CD8-positive, alpha-beta memory T cell (primary cell): ENCODE measurements at regions of chr9 and their contacts with region 1.

Region 1: GRCh38 chr9:35732122-35732799 is at the starts of genes CREB3 and TLN1:
- DNase-seq: peak; percentile 91 to 98 (median 97)
- H3K4me3 ChIP-seq: peak within 1 kb of the TSS; percentile 97
- H3K4me3 Mint-ChIP-seq: peak within 1 kb of the TSS in 4 of 7 donors; percentile 87 to 96 (median 94)
- H3K27ac ChIP-seq: peak within 1 kb of the TSS; percentile 92
- H3K27ac Mint-ChIP-seq: peak within 1 kb of the TSS in 7 of 8 donors; percentile 92 to 98 (median 95)
- H3K4me1 ChIP-seq: peaks cover 63% of the 10 kb centered on the region
- H3K4me1 Mint-ChIP-seq: peaks cover 20 to 27% (median 22%) of the 10 kb centered on the region in 3 donors
- H3K27me3 ChIP-seq: no peaks in the 10 kb centered on the region
- H3K27me3 Mint-ChIP-seq: no peaks in the 10 kb centered on the region
- total RNA-seq, gene CREB3: 38.0 to 38.6 TPM
- total RNA-seq, gene TLN1: 248 to 249 TPM

Region 2: GRCh38 chr9:35603987-35604577 is 128.2 kb before region 1 on chr9:
- CTCF ChIA-PET with region 1: interaction called, 15 read pairs
- POLR2A ChIA-PET with region 1: interaction called, 19 read pairs
- DNase-seq: peak; percentile 99 to 100 (median 99)
- H3K4me3 ChIP-seq: peak overlapping the region; percentile 99
- H3K4me3 Mint-ChIP-seq: peak overlapping the region; percentile 94 to 99 (median 98)
- H3K27ac ChIP-seq: peak overlapping the region; percentile 87
- H3K27ac Mint-ChIP-seq: peak overlapping the region; percentile 96 to 100 (median 98)
- H3K4me1 ChIP-seq: peaks cover 21% of the 10 kb centered on the region
- H3K4me1 Mint-ChIP-seq: peaks cover 33 to 38% (median 34%) of the 10 kb centered on the region in 3 donors
- H3K27me3 ChIP-seq: no peaks in the 10 kb centered on the region
- H3K27me3 Mint-ChIP-seq: peaks cover 0 to 2% of the 10 kb centered on the region in 2 donors

Region 3: DNA sequence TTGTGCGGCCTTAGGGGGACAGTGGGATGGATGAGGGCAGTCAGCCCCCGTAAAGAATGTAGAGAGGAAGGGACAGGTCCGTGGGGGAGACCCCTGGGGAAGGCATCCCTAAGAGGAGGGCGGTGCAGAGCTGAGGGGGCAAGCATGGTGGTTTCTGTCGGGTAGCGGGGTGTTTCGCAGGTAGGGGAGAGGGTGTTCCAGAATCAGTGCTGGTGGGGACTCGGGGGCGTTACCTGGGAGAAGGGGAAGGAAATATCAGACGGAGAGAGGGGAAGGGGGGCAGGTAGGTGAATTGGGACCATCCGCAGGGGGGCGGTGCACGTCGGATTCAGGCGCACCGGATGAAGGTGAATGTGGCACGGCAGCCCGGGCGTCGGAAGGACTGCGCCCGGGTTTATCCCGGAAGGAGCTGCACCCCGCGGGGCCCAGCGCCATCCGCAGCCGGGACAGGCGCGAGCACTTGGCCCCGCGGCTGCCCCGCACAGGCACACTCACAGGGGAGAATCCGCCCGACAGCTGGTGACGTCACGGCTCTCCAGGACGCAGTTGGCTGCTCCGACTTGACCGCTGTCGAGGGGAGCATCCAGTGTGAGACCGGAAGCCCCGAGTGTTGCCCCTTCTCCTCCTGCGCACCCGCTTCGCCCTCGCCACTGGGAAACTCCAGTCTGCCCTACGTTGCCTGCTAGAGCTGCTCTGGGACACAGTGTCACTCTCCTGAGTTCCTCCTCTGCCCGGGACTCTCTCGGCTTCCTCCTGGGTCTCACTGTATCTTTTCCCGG is 115.4 kb before region 1 on chr9:
- CTCF ChIA-PET with region 1: interaction called, 25 read pairs
- POLR2A ChIA-PET with region 1: interaction called, 13 read pairs
- DNase-seq: peak; percentile 63 to 84 (median 71)
- H3K4me3 ChIP-seq: peak overlapping the region; percentile 82
- H3K4me3 Mint-ChIP-seq: peak overlapping the region; percentile 85 to 92 (median 89)
- H3K27ac ChIP-seq: peak overlapping the region; percentile 70
- H3K27ac Mint-ChIP-seq: peak overlapping the region; percentile 89 to 100 (median 98)
- H3K4me1 ChIP-seq: peaks cover 34% of the 10 kb centered on the region
- H3K4me1 Mint-ChIP-seq: peaks cover 42 to 49% (median 46%) of the 10 kb centered on the region in 3 donors
- H3K27me3 ChIP-seq: no peaks in the 10 kb centered on the region
- H3K27me3 Mint-ChIP-seq: peaks cover 0 to 1% of the 10 kb centered on the region in 2 donors

Region 4: GRCh38 chr9:35696525-35697215 is 35.6 kb before region 1 on chr9:
- CTCF ChIA-PET with region 1: interaction called, 87 read pairs
- POLR2A ChIA-PET with region 1: no interaction called
- DNase-seq: peak; percentile 36 to 71 (median 56)
- H3K4me3 ChIP-seq: no peak overlapping the region
- H3K4me3 Mint-ChIP-seq: peak overlapping the region in 2 of 7 donors; percentile 17 to 48
- H3K27ac ChIP-seq: no peak overlapping the region
- H3K27ac Mint-ChIP-seq: peak overlapping the region; percentile 47 to 94 (median 82)
- H3K4me1 ChIP-seq: no peaks in the 10 kb centered on the region
- H3K4me1 Mint-ChIP-seq: peaks cover 7 to 14% (median 13%) of the 10 kb centered on the region in 3 donors
- H3K27me3 ChIP-seq: no peaks in the 10 kb centered on the region
- H3K27me3 Mint-ChIP-seq: no peaks in the 10 kb centered on the region

Region 5: GRCh38 chr9:35756275-35757225 is 24.3 kb after region 1 on chr9:
- CTCF ChIA-PET with region 1: interaction called, 19 read pairs
- POLR2A ChIA-PET with region 1: interaction called, 4 read pairs
- DNase-seq: peak; percentile 65 to 86 (median 67)
- H3K4me3 ChIP-seq: peak overlapping the region; percentile 92
- H3K4me3 Mint-ChIP-seq: peak overlapping the region; percentile 92 to 100 (median 96)
- H3K27ac ChIP-seq: peak overlapping the region; percentile 76
- H3K27ac Mint-ChIP-seq: peak overlapping the region; percentile 92 to 99 (median 96)
- H3K4me1 ChIP-seq: peaks cover 25% of the 10 kb centered on the region
- H3K4me1 Mint-ChIP-seq: peaks cover 43 to 63% (median 51%) of the 10 kb centered on the region in 3 donors
- H3K27me3 ChIP-seq: no peaks in the 10 kb centered on the region
- H3K27me3 Mint-ChIP-seq: no peaks in the 10 kb centered on the region

Region 6: DNA sequence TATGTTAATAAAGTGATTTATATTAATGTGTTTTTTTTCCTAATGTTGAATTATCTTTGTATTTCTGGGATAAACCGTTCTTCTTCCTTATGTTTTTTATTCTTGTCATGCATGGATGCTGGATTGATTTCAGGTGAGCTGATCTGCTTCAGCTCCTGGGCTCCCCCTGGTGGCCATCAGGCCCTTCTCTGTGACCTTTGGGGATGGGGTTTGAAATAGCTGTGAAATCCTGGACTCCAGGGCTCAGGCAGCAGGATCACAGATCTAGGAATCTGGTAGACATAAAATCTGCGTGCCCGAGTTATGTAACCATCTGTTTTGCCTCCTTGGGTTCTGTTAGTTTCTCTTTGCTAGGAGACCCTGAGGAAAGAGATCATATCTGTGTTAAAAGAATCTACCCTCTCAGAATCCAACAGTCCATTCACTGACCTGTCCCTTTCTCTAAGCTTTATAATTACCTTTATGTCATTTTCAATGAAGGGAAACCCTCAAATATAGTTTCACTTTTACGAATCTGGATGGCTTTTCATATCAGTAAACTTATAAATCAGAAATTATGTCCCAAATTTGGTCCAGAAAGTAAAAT is 150.1 kb after region 1 on chr9:
- CTCF ChIA-PET with region 1: interaction called, 17 read pairs
- POLR2A ChIA-PET with region 1: no interaction called
- DNase-seq: peak; percentile 57 to 84 (median 74)
- H3K4me3 ChIP-seq: no peak overlapping the region
- H3K4me3 Mint-ChIP-seq: no peak overlapping the region
- H3K27ac ChIP-seq: no peak overlapping the region
- H3K27ac Mint-ChIP-seq: no peak overlapping the region
- H3K4me1 ChIP-seq: no peaks in the 10 kb centered on the region
- H3K4me1 Mint-ChIP-seq: no peaks in the 10 kb centered on the region
- H3K27me3 ChIP-seq: no peaks in the 10 kb centered on the region
- H3K27me3 Mint-ChIP-seq: peaks cover 11 to 19% of the 10 kb centered on the region in 2 donors